ENCODE measurements at regions of chr11 and their contacts with region 1.

Region 1: DNA sequence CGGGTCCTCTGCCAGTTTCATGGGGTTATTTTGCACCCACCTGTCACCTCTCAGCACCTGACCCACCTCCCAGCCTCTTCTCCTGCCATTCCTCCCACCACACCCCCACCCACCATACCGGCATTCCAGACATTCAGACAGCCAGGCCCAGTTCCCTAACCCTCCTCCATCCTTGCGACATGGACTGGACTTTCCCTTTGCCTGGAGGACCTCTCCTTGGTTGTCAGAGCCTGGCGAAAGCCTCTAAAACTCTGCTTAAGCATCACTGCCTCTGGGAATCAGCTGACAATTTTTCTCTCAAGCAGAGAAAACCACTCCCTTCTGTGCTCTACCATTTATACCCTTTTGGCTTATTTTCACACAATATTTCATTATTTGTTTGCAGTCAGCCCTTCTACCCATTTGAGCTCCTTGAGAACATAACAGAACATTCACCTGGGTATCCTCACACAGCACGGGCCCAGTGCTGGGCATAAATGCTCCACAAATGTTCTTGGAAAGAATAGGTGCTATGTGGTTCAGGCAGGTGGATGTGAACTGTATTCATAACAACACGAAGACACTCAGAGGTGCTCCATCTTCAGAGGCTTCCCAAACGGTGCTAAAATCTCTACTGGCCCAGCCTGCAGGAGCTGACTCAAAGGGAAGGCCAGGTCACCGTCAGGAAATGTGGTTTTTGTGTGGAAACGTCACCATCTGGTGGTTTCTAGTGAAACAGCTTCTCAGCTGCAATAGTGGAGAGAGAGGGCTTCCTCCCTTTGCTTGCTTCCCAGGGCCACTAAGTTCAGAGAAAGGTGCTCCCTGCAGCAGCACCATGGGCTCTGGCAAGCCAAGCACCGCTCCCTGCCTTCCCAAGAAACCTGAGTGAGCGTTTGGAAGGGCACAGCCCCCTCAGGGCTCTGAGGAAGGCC is 10.4 kb downstream of the SPATA19 start:
- DNase-seq: peak; percentile 72
- ATAC-seq: peak; percentile 84
- H3K4me3 Mint-ChIP-seq: no peak overlapping the region
- H3K27ac Mint-ChIP-seq: 0 out of 2 replicates have a peak overlapping the region, but pooled peaks have one; percentile 0
- H3K4me1 Mint-ChIP-seq: peaks cover 19% of the 10 kb centered on the region
- H3K27me3 Mint-ChIP-seq: no peaks in the 10 kb centered on the region; the same call in 1 of the 2 replicates
- CTCF ChIP-seq: peak; percentile 60

Region 2: DNA sequence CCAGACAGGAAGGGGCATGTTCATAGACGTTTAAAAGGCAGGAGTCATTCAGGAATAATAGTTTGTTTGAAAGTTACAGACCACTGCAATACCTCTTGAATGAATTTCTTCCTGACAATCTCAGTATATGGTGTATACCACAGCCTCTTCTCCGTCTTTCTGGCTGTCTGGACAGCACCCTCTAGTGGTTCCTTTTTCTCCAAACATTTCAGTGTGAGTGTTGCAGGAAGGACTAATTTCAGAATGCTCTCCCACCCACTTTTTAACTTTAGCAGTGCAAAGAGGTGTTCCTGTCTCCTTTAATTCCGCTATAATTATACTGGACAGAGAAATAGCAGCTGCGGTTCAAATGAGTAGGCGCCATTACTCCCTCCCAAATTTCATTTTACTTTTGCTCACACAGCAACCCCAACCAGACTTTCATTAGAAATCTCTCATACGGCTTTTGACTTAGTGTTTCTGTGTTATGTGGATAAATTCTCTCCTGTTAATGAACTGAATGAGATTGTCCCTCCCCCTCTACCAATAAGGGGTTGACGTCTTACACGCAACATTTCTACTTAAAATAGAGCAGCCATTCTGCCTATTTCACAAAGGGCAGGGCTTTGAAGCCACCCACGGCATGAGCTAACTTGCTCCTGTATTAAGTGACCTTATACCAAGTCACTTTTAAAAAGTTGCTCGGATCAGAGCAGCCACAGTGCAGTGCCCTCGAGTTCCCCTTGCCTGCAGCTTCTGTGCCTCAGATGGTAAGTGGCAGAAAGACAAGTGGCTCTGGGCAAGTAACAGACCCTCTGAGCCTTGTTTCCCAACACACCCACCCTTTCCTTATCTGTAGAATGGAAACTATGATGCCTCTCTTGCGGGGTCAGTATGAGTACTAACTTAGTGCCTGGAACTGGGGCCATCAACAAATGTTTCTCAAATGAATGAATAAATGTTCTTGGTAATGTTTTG is 671.2 kb before region 1 on chr11:
- CTCF ChIA-PET with region 1: interaction called, 12 read pairs
- POLR2A ChIA-PET with region 1: no interaction called
- DNase-seq: no peak
- ATAC-seq: peak; percentile 66
- H3K4me3 Mint-ChIP-seq: no peak overlapping the region
- H3K27ac Mint-ChIP-seq: no peak overlapping the region
- H3K4me1 Mint-ChIP-seq: peaks cover 33% of the 10 kb centered on the region
- H3K27me3 Mint-ChIP-seq: no peaks in the 10 kb centered on the region
- CTCF ChIP-seq: peak; percentile 63

Region 3: GRCh38 chr11:133619973-133620372 is 215.0 kb before region 1 on chr11:
- CTCF ChIA-PET with region 1: interaction called, 21 read pairs
- POLR2A ChIA-PET with region 1: no interaction called
- DNase-seq: no peak
- ATAC-seq: no peak; the same call in 1 of the 2 replicates
- H3K4me3 Mint-ChIP-seq: no peak overlapping the region
- H3K27ac Mint-ChIP-seq: no peak overlapping the region
- H3K4me1 Mint-ChIP-seq: peaks cover 9% of the 10 kb centered on the region
- H3K27me3 Mint-ChIP-seq: no peaks in the 10 kb centered on the region
- CTCF ChIP-seq: no peak

Region 4: DNA sequence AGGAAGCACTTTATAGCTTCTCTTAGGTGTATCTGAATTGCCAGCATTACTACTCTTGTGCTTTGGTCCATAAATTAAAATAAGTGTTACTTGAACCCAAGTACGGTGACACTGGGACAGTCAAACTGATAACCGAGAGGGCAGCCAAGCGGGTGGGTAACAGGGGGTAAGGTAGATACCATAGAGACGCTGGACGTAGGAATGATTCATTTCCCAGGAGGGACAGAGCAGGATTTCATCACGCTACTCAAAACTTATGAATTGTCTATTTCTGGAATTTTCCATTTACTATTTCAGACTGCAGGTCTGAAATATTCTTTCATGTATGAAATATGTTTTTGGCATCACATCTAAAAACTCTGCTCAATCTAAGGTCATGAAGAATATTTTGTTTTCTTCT is 25.2 kb after region 1 on chr11:
- CTCF ChIA-PET with region 1: interaction called, 14 read pairs
- POLR2A ChIA-PET with region 1: no interaction called
- DNase-seq: no peak
- ATAC-seq: no peak
- H3K4me3 Mint-ChIP-seq: no peak overlapping the region
- H3K27ac Mint-ChIP-seq: no peak overlapping the region
- H3K4me1 Mint-ChIP-seq: peaks cover under 1% of the 10 kb centered on the region
- H3K27me3 Mint-ChIP-seq: no peaks in the 10 kb centered on the region
- CTCF ChIP-seq: no peak